ENCODE measurements at regions of chr1 and their contacts with region 1.

Region 1: GRCh38 chr1:110307239-110307974 is 31.8 kb upstream of the RBM15 start:
- DNase-seq: no peak
- ATAC-seq: no peak

Region 2: DNA sequence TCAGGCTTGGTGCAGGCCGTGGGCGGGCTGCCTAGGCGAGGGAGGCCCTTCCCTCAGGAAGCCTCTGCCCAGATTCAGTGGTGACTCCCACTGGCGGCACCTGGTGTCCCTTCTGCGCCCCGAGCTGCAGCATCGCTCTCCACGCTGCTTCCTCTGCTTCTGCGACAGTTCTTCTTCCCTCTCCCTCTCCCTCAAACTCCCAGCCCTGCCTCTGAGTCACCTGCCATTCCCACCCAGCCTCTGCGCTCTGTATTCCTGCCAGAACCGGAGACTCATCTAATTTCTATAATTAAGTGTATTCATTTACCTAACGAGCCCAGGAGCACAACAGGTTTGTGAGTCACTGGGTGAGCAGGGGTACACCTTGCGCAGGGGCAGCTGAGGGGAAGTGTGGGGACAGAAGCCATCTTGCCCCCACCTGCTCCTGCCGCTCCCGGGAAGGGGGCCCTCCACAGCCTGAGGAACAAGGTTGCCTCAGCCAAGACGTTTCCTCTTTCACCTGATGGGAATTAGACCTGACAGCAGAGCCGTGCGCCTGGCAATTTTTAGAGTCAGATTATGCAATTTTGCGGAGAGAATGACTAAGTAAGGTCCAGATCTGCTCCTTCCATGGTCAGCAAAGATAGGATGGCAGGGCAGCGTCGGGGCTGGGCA is 77.9 kb before region 1 on chr1:
- intact Hi-C with region 1: loop called in 1 of 2 experiments (anchors 2 kb)
- DNase-seq: no peak
- ATAC-seq: no peak

Region 3: GRCh38 chr1:111154021-111154999 is 846.9 kb after region 1 on chr1:
- intact Hi-C with region 1: no loop called
- DNase-seq: no peak
- ATAC-seq: no peak

Measured in left colon (tissue), 2 donors.